ENCODE measurements at regions of chr2 and their contacts with region 1.

Region 1: DNA sequence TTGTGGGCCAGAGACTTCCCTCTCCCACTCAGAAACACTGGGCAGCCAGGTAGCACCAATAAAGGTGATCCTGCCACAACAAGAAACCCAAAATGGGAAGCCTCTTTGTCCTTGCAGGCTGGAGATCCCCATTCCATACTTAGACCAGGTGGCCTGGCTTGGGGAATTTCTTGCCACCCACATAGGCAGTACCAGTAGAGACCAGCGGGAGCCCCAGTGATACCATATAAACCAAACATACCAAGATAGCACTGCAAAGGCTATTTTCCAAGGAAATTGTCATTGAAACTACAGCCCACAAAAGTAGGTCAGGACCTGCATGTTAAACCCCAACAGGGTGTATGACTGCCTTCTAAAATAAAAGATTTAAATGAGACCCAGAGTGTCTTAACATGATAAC is 171.6 kb downstream of the DIS3L2 start:
- DNase-seq: no peak
- CTCF ChIP-seq: no peak

Region 2: GRCh38 chr2:231245253-231246094 is 887.6 kb before region 1 on chr2:
- in situ Hi-C with region 1: no loop called
- DNase-seq: no peak
- CTCF ChIP-seq: peak; percentile 43

Region 3: GRCh38 chr2:231463698-231464575 is 669.1 kb before region 1 on chr2 and contains the start of gene NCL:
- in situ Hi-C with region 1: no loop called
- DNase-seq: peak; percentile 88
- CTCF ChIP-seq: no peak

Region 4: GRCh38 chr2:231929961-231930592 is 203.0 kb before region 1 on chr2:
- in situ Hi-C with region 1: loop called (anchors 10 kb)
- DNase-seq: peak; percentile 58
- CTCF ChIP-seq: peak; percentile 61